ENCODE measurements at regions of chr20 and their contacts with region 1.

Region 1: GRCh38 chr20:44747166-44748004 is 1.7 kb downstream of the KCNK15 start:
- DNase-seq: peak; percentile 80 to 86
- ATAC-seq: peak; percentile 65 to 85
- H3K4me3 ChIP-seq: no peak overlapping the region
- H3K27ac ChIP-seq: peak overlapping the region; percentile 62 to 94
- H3K4me1 ChIP-seq: peaks cover 36% of the 10 kb centered on the region
- CTCF ChIP-seq: peak; percentile 82
- EP300 ChIP-seq: no peak; a peak in 1 of 5 replicates
- POLR2A ChIP-seq: no peak
- RAD21 ChIP-seq: peak; percentile 68 to 77

Region 2: GRCh38 chr20:44495802-44496481 is 251.4 kb before region 1 on chr20:
- CTCF ChIA-PET with region 1: no interaction called
- POLR2A ChIA-PET with region 1: no interaction called
- DNase-seq: peak; percentile 70 to 89
- ATAC-seq: peak; percentile 81 to 88
- H3K4me3 ChIP-seq: peak overlapping the region; percentile 15; the same call in 1 of the 3 replicates
- H3K27ac ChIP-seq: peak overlapping the region; percentile 86 to 90
- H3K4me1 ChIP-seq: peaks cover 47% of the 10 kb centered on the region
- CTCF ChIP-seq: no peak
- EP300 ChIP-seq: peak; percentile 7 to 36; a peak in 1 of 5 replicates
- POLR2A ChIP-seq: no peak
- RAD21 ChIP-seq: no peak

Region 3: DNA sequence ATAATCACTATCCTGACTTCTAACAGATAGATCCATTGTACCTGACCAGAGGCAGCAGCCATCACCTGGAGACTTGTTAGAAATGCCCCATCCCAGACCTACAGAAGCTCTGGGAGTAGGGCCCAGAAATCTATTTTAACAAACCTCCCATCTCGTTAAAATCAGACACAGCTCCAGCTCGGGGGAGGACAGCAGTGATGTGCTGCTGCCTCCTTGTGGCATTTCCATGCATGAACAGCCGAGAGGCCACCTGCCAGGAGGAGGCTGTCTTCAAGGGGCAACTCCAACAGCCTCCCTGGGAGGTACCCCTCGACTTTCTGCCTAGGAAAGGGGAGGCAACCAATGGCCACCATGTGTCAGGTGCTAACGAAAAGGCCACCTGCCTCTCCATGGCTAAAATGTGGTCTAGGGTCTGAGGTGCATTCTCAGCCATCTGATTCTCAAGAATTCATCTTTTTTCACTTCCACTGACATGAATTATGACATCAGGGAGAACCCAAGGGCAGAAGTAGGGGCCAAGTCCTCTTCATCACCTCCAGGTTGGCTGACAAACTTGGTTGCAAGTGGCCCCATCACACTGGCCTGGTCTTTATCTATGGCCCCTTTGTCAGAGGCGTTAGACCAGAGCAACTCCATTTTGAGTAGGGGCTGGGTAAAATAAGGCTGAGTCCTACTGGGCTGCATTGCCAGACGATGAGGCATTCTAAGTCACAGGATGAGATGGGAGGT is 13.9 kb before region 1 on chr20:
- CTCF ChIA-PET with region 1: interaction called, 33 read pairs
- POLR2A ChIA-PET with region 1: interaction called, 4 read pairs
- DNase-seq: peak; percentile 69 to 83
- ATAC-seq: peak; percentile 20 to 46; a peak in 4 of 6 replicates
- H3K4me3 ChIP-seq: no peak overlapping the region
- H3K27ac ChIP-seq: peak overlapping the region; percentile 96 to 98
- H3K4me1 ChIP-seq: peaks cover 67% of the 10 kb centered on the region
- CTCF ChIP-seq: peak; percentile 98
- EP300 ChIP-seq: no peak
- POLR2A ChIP-seq: no peak
- RAD21 ChIP-seq: peak; percentile 100

Region 4: DNA sequence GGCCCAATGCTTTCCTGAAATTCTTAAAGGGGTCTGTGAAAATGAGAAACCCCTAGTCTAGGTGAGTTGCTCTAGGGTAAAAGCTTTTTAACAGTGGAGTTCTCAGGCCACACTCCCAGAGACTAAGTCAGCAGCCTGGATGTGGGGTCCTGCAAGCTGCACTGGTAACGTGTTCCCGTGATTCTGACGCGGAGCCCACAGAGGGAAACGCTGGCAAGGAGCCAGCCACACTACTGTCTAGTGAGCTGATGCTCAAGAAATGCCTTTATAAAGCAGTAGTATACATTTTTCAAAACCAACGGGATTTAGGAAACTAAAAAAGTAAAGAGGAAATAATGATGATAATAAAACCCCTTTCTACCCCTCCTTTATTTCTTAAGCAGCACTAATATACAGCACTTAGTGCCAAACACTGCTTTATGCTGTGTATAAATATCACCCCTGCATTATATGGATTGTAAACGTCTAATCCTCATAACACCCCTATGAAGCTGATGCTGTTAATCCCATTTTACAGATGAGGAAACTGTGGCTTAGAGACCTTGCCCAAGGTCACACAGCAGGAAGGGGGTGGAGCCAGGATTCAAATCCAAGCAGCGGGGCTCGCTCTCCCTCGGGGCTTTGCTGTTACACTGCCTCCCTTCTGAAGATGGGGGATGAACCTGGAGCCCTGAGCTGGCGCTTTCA is 23.2 kb after region 1 on chr20:
- CTCF ChIA-PET with region 1: interaction called, 22 read pairs
- POLR2A ChIA-PET with region 1: no interaction called
- DNase-seq: no peak
- ATAC-seq: no peak
- H3K4me3 ChIP-seq: no peak overlapping the region
- H3K27ac ChIP-seq: no peak overlapping the region
- H3K4me1 ChIP-seq: no peaks in the 10 kb centered on the region
- CTCF ChIP-seq: no peak
- EP300 ChIP-seq: no peak
- POLR2A ChIP-seq: no peak
- RAD21 ChIP-seq: no peak

Region 5: GRCh38 chr20:44817143-44817910 is 69.9 kb after region 1 on chr20:
- CTCF ChIA-PET with region 1: interaction called, 11 read pairs
- POLR2A ChIA-PET with region 1: no interaction called
- DNase-seq: no peak
- ATAC-seq: no peak
- H3K4me3 ChIP-seq: no peak overlapping the region
- H3K27ac ChIP-seq: peak overlapping the region in 1 of 2 experiments; percentile 61; a peak in 3 of 6 replicates
- H3K4me1 ChIP-seq: no peaks in the 10 kb centered on the region
- CTCF ChIP-seq: no peak
- EP300 ChIP-seq: no peak
- POLR2A ChIP-seq: no peak
- RAD21 ChIP-seq: no peak

Region 6: GRCh38 chr20:44861531-44862006 is 114.2 kb after region 1 on chr20:
- CTCF ChIA-PET with region 1: interaction called, 96 read pairs
- POLR2A ChIA-PET with region 1: interaction called, 3 read pairs
- DNase-seq: no peak
- ATAC-seq: peak; percentile 47 to 56; a peak in 2 of 6 replicates
- H3K4me3 ChIP-seq: no peak overlapping the region
- H3K27ac ChIP-seq: peak overlapping the region in 1 of 2 experiments; percentile 45; a peak in 2 of 6 replicates
- H3K4me1 ChIP-seq: peaks cover 11% of the 10 kb centered on the region; the same call in 2 of the 3 replicates
- CTCF ChIP-seq: no peak
- EP300 ChIP-seq: no peak
- POLR2A ChIP-seq: no peak
- RAD21 ChIP-seq: no peak

Region 7: GRCh38 chr20:44884907-44885391 is 137.6 kb after region 1 on chr20:
- CTCF ChIA-PET with region 1: interaction called, 12 read pairs
- POLR2A ChIA-PET with region 1: interaction called, 3 read pairs
- DNase-seq: no peak
- ATAC-seq: no peak
- H3K4me3 ChIP-seq: peak overlapping the region; percentile 92
- H3K27ac ChIP-seq: peak overlapping the region; percentile 59 to 99
- H3K4me1 ChIP-seq: peaks cover 30% of the 10 kb centered on the region
- CTCF ChIP-seq: no peak
- EP300 ChIP-seq: no peak
- POLR2A ChIP-seq: no peak; the same call in 1 of the 2 replicates
- RAD21 ChIP-seq: no peak

Region 8: GRCh38 chr20:45088247-45088646 is 340.9 kb after region 1 on chr20:
- CTCF ChIA-PET with region 1: no interaction called
- POLR2A ChIA-PET with region 1: no interaction called
- DNase-seq: no peak
- ATAC-seq: no peak
- H3K4me3 ChIP-seq: no peak overlapping the region
- H3K27ac ChIP-seq: no peak overlapping the region
- H3K4me1 ChIP-seq: no peaks in the 10 kb centered on the region
- CTCF ChIP-seq: no peak
- EP300 ChIP-seq: no peak
- POLR2A ChIP-seq: no peak
- RAD21 ChIP-seq: no peak